CD4-positive, alpha-beta memory T cell (primary cell): ENCODE measurements at regions of chr3 and their contacts with region 1.

Region 1: DNA sequence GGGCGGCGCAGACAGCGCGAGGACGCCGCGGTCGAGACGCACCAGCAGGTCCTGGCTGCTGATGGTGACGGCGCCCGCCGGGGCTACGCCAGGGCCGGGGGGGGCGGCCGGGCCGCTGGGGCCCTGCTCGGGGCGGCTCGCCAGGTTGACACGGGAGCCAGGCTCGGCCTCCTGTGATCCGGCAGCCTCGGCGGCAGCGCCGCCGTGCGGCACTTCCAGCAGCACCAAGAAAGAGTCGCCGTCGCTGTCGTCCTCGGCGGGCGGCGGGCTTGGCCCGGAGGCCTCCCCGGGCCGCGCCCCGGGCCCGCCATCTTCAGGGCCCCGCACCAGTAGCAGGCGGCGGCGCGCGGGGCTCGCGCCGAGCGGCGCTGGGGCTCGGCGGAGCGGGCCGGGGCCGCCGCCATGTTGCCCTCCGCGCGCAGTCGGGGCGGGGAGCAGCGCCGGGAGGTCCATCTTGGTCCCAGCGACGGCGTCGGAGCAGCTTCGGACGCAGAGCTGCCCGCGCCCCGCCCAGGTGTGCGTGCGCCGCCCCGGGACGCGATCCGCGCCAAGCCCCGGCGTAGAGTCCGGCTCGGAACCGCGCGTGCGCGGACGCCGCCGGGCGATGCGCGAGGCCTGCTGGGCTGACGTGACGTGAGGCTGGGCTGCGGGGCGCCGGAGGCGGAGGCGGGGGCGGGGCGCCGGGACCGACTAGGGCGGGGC is at the start of gene ZXDC:
- DNase-seq: peak; percentile 90 to 93 (median 92)
- H3K4me3 ChIP-seq: peak within 1 kb of the TSS; percentile 60 to 73
- H3K4me3 Mint-ChIP-seq: peak within 1 kb of the TSS; percentile 87 to 94 (median 92)
- H3K27ac ChIP-seq: peak within 1 kb of the TSS; percentile 64
- H3K27ac Mint-ChIP-seq: peak within 1 kb of the TSS; percentile 83 to 98 (median 92)
- H3K4me1 ChIP-seq: peaks cover 36% of the 10 kb centered on the region
- H3K4me1 Mint-ChIP-seq: peaks cover 30 to 55% (median 44%) of the 10 kb centered on the region in 4 donors
- H3K27me3 ChIP-seq: no peaks in the 10 kb centered on the region
- H3K27me3 Mint-ChIP-seq: no peaks in the 10 kb centered on the region
- total RNA-seq, gene ZXDC: 58.2 to 66.3 TPM

Region 2: GRCh38 chr3:126357295-126358037 is 118.1 kb before region 1 on chr3 and contains the start of gene KLF15:
- CTCF ChIA-PET with region 1: no interaction called
- POLR2A ChIA-PET with region 1: no interaction called
- intact Hi-C with region 1: loop called (anchors 2 kb)
- DNase-seq: peak; percentile 64 to 72 (median 66)
- H3K4me3 ChIP-seq: peak within 1 kb of the TSS; percentile 42 to 49
- H3K4me3 Mint-ChIP-seq: peak within 1 kb of the TSS; percentile 85 to 93 (median 90)
- H3K27ac ChIP-seq: no peak within 1 kb of the TSS
- H3K27ac Mint-ChIP-seq: peak within 1 kb of the TSS in 6 of 7 donors; percentile 48 to 84 (median 66)
- H3K4me1 ChIP-seq: peaks cover 9% of the 10 kb centered on the region
- H3K4me1 Mint-ChIP-seq: peaks cover 9 to 25% (median 12%) of the 10 kb centered on the region in 4 donors
- H3K27me3 ChIP-seq: peaks cover 40% of the 10 kb centered on the region
- H3K27me3 Mint-ChIP-seq: peaks cover 36 to 44% of the 10 kb centered on the region in 2 donors
- total RNA-seq, gene KLF15: 0.67 to 0.72 TPM